Activated CD4-positive, alpha-beta T cell treated with anti-CD3 and anti-CD28 coated beads for 36 hours (primary cell): ENCODE measurements at regions of chr5 and their contacts with region 1.

Region 1: GRCh38 chr5:63963080-63963735 is 963 bp upstream of the HTR1A start:
- DNase-seq: peak; percentile 47
- ATAC-seq: no peak
- H3K4me3 Mint-ChIP-seq: no peak overlapping the region
- H3K27ac Mint-ChIP-seq: no peak overlapping the region
- H3K4me1 Mint-ChIP-seq: no peaks in the 10 kb centered on the region
- H3K27me3 Mint-ChIP-seq: peaks cover 33% of the 10 kb centered on the region

Region 2: GRCh38 chr5:63125862-63126261 is 837.3 kb before region 1 on chr5:
- CTCF ChIA-PET with region 1: no interaction called
- POLR2A ChIA-PET with region 1: no interaction called
- intact Hi-C with region 1: loop called in 1 of 2 experiments (anchors 5 kb)
- DNase-seq: peak; percentile 24
- ATAC-seq: peak; percentile 63
- H3K4me3 Mint-ChIP-seq: no peak overlapping the region
- H3K27ac Mint-ChIP-seq: no peak overlapping the region
- H3K4me1 Mint-ChIP-seq: no peaks in the 10 kb centered on the region
- H3K27me3 Mint-ChIP-seq: peaks cover 2% of the 10 kb centered on the region

Region 3: GRCh38 chr5:63401436-63402046 is 561.7 kb before region 1 on chr5:
- CTCF ChIA-PET with region 1: interaction called, 7 read pairs
- POLR2A ChIA-PET with region 1: no interaction called
- intact Hi-C with region 1: loop called (anchors 1 to 2 kb)
- DNase-seq: peak; percentile 66
- ATAC-seq: no peak
- H3K4me3 Mint-ChIP-seq: no peak overlapping the region
- H3K27ac Mint-ChIP-seq: no peak overlapping the region
- H3K4me1 Mint-ChIP-seq: no peaks in the 10 kb centered on the region
- H3K27me3 Mint-ChIP-seq: no peaks in the 10 kb centered on the region

Region 4: GRCh38 chr5:63648376-63648775 is 314.8 kb before region 1 on chr5:
- CTCF ChIA-PET with region 1: no interaction called
- POLR2A ChIA-PET with region 1: no interaction called
- intact Hi-C with region 1: no loop called
- DNase-seq: no peak
- ATAC-seq: no peak
- H3K4me3 Mint-ChIP-seq: no peak overlapping the region
- H3K27ac Mint-ChIP-seq: no peak overlapping the region
- H3K4me1 Mint-ChIP-seq: no peaks in the 10 kb centered on the region
- H3K27me3 Mint-ChIP-seq: no peaks in the 10 kb centered on the region